Psoas muscle (tissue), 8 donors: ENCODE measurements at regions of chr4 and their contacts with region 1.

Region 1: GRCh38 chr4:10239982-10240654 is 123.5 kb upstream of the WDR1 start:
- DNase-seq: no peak
- ATAC-seq: no peak
- H3K4me3 ChIP-seq: no peak overlapping the region
- H3K27ac ChIP-seq: no peak overlapping the region
- H3K4me1 ChIP-seq: no peaks in the 10 kb centered on the region
- H3K27me3 ChIP-seq: peaks cover 0 to 5% (median 0%) of the 10 kb centered on the region in 3 donors
- CTCF ChIP-seq: no peak

Region 2: GRCh38 chr4:9845791-9846493 is 394.2 kb before region 1 on chr4:
- intact Hi-C with region 1: no loop called
- DNase-seq: no peak
- ATAC-seq: no peak
- H3K4me3 ChIP-seq: no peak overlapping the region
- H3K27ac ChIP-seq: no peak overlapping the region
- H3K4me1 ChIP-seq: no peaks in the 10 kb centered on the region
- H3K27me3 ChIP-seq: no peaks in the 10 kb centered on the region
- CTCF ChIP-seq: no peak

Region 3: DNA sequence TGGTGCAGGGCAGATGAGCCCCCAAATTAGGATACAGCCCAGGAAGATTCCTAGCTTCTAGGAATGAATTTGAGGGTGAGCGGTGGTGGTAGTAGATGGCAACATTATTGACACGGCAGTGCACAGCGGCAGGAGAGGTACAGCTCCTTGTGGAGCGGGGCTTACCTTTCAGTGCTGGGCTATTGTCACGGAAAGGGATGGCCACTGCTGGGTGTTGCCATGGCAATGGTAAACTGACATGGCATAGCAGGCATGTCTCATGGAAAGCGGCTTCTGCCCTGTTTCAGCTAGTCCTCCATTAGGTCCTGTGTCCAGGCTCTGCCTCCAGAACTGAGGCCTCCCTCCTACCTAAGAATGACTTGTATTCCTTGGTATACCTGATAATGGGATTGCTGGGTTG is 41.8 kb before region 1 on chr4:
- intact Hi-C with region 1: loop called in 1 of 2 experiments (anchors 5 kb)
- DNase-seq: no peak
- ATAC-seq: no peak
- H3K4me3 ChIP-seq: no peak overlapping the region
- H3K27ac ChIP-seq: no peak overlapping the region
- H3K4me1 ChIP-seq: no peaks in the 10 kb centered on the region
- H3K27me3 ChIP-seq: peaks cover 0 to 2% (median 0%) of the 10 kb centered on the region in 3 donors
- CTCF ChIP-seq: no peak

Region 4: DNA sequence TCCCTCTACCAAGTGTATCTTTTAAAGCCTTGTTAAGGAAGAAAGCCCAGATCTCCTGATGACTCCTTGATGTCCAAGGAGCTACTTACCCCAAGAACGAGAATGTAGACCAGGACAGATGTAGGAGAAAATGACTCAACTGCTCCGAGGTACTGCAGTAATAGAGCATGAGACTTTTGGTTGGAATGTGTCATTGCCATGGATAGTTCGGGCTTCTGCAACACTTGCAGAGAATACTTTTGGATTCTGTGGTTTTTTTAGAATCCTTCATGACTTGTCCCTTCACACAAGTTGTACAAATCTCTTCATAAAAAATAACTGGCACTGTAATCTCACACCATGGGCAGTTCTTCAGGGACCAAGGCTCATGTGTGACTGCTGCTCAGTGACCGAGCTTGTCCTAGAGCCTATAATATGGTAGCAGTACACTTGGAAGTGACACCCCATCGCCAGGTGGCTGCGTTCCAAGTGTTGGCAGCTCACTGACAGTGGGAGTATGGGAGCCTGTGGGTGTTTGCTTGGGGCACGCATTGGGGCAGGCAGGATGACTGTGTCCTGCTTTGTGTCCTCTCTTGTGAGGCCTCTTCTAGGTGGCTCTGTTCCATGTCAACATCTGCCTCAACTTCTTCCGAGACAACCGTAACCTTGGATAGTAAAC is 35.6 kb before region 1 on chr4:
- intact Hi-C with region 1: loop called in 1 of 2 experiments (anchors 5 kb)
- DNase-seq: peak in 1 of 2 donors; percentile 19
- ATAC-seq: no peak
- H3K4me3 ChIP-seq: no peak overlapping the region
- H3K27ac ChIP-seq: no peak overlapping the region
- H3K4me1 ChIP-seq: no peaks in the 10 kb centered on the region
- H3K27me3 ChIP-seq: peaks cover 2 to 6% (median 2%) of the 10 kb centered on the region in 3 donors
- CTCF ChIP-seq: no peak

Region 5: GRCh38 chr4:11640584-11640983 is 1400.5 kb after region 1 on chr4:
- intact Hi-C with region 1: no loop called
- DNase-seq: no peak
- ATAC-seq: no peak
- H3K4me3 ChIP-seq: no peak overlapping the region
- H3K27ac ChIP-seq: no peak overlapping the region
- H3K4me1 ChIP-seq: no peaks in the 10 kb centered on the region
- H3K27me3 ChIP-seq: no peaks in the 10 kb centered on the region
- CTCF ChIP-seq: no peak